Activated CD4-positive, alpha-beta T cell treated with anti-CD3 and anti-CD28 coated beads for 36 hours (primary cell): ENCODE measurements at regions of chr13 and their contacts with region 1.

Region 1: GRCh38 chr13:101626925-101627555 is 174.6 kb downstream of the ITGBL1 start:
- DNase-seq: peak; percentile 53
- ATAC-seq: peak; percentile 86
- H3K4me3 Mint-ChIP-seq: peak overlapping the region; percentile 1
- H3K27ac Mint-ChIP-seq: no peak overlapping the region
- H3K4me1 Mint-ChIP-seq: peaks cover 42% of the 10 kb centered on the region
- H3K27me3 Mint-ChIP-seq: peaks cover 13% of the 10 kb centered on the region

Region 2: GRCh38 chr13:100392709-100393641 is 1234.1 kb before region 1 on chr13:
- CTCF ChIA-PET with region 1: no interaction called
- POLR2A ChIA-PET with region 1: no interaction called
- intact Hi-C with region 1: loop called in 1 of 2 experiments (anchors 5 kb)
- DNase-seq: peak; percentile 85
- ATAC-seq: peak; percentile 80
- H3K4me3 Mint-ChIP-seq: no peak overlapping the region
- H3K27ac Mint-ChIP-seq: peak overlapping the region; percentile 59
- H3K4me1 Mint-ChIP-seq: peaks cover 31% of the 10 kb centered on the region
- H3K27me3 Mint-ChIP-seq: no peaks in the 10 kb centered on the region

Region 3: GRCh38 chr13:100674848-100675660 is 952.0 kb before region 1 on chr13:
- CTCF ChIA-PET with region 1: no interaction called
- POLR2A ChIA-PET with region 1: no interaction called
- intact Hi-C with region 1: loop called in 1 of 2 experiments (anchors 10 kb)
- DNase-seq: peak; percentile 99
- ATAC-seq: peak; percentile 96
- H3K4me3 Mint-ChIP-seq: peak overlapping the region; percentile 77
- H3K27ac Mint-ChIP-seq: peak overlapping the region; percentile 83
- H3K4me1 Mint-ChIP-seq: peaks cover 23% of the 10 kb centered on the region
- H3K27me3 Mint-ChIP-seq: peaks cover 7% of the 10 kb centered on the region

Region 4: DNA sequence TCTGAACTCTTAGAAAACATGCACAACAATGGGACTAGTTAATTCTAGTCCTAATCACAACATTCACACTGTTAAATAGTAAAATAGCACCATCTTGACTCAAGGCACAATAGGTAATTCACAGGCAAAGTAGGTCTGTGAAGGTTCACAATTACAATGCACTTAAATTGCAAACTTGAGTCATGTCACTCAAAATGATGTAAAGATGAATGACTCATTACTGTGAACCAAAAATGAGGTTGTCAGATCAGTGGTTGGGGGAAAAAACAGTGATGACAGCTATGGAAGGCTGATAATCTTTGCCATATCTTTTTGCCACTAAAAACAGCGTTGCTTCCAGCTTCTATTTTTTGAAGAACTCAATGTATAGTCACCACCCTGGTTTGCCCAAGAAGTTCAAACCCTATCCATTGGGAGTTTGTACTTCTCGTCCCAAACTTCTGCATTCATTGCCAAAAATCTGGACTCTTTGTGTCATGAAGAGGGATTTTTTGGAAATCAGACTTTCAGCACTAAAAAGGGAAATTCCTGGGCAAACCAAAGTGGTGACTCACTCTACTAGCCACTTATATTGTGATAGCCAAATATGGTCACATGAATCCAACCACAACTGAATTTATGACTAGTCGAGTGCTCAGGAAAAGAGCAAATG is 751.5 kb before region 1 on chr13:
- CTCF ChIA-PET with region 1: no interaction called
- POLR2A ChIA-PET with region 1: no interaction called
- intact Hi-C with region 1: loop called in 1 of 2 experiments (anchors 10 kb)
- DNase-seq: peak; percentile 17
- ATAC-seq: peak; percentile 91
- H3K4me3 Mint-ChIP-seq: no peak overlapping the region
- H3K27ac Mint-ChIP-seq: no peak overlapping the region
- H3K4me1 Mint-ChIP-seq: peaks cover 12% of the 10 kb centered on the region
- H3K27me3 Mint-ChIP-seq: peaks cover 41% of the 10 kb centered on the region

Region 5: DNA sequence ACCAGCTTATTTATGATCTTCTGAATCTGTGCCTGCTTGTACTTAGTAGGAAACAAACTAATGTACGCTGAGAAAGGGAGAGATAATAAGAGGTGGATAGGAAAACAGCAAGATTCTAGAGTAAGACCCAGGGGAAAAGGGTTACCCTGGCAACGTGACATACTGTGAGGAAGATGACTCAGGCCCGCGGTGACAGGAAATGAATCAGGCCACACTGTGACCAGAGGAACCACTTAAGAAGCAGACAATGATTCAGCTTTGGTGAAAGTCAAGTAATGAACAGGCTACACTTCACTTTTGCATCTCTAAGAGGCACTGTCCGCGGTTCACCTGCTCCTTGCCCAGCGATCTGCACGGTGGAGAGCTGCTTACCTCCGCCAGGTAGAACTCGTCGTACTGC is 369.0 kb before region 1 on chr13:
- CTCF ChIA-PET with region 1: no interaction called
- POLR2A ChIA-PET with region 1: no interaction called
- intact Hi-C with region 1: loop called (anchors 2 to 5 kb)
- DNase-seq: peak; percentile 83
- ATAC-seq: peak; percentile 99
- H3K4me3 Mint-ChIP-seq: no peak overlapping the region
- H3K27ac Mint-ChIP-seq: no peak overlapping the region
- H3K4me1 Mint-ChIP-seq: peaks cover 7% of the 10 kb centered on the region
- H3K27me3 Mint-ChIP-seq: peaks cover 14% of the 10 kb centered on the region

Region 6: GRCh38 chr13:101520672-101521071 is 106.4 kb before region 1 on chr13:
- CTCF ChIA-PET with region 1: no interaction called
- POLR2A ChIA-PET with region 1: no interaction called
- intact Hi-C with region 1: loop called in 1 of 2 experiments (anchors 5 kb)
- DNase-seq: peak; percentile 29
- ATAC-seq: peak; percentile 82
- H3K4me3 Mint-ChIP-seq: no peak overlapping the region
- H3K27ac Mint-ChIP-seq: no peak overlapping the region
- H3K4me1 Mint-ChIP-seq: peaks cover 14% of the 10 kb centered on the region
- H3K27me3 Mint-ChIP-seq: peaks cover 4% of the 10 kb centered on the region

Region 7: GRCh38 chr13:102091231-102091630 is 464.2 kb after region 1 on chr13:
- CTCF ChIA-PET with region 1: no interaction called
- POLR2A ChIA-PET with region 1: no interaction called
- intact Hi-C with region 1: no loop called
- DNase-seq: no peak
- ATAC-seq: no peak
- H3K4me3 Mint-ChIP-seq: no peak overlapping the region
- H3K27ac Mint-ChIP-seq: no peak overlapping the region
- H3K4me1 Mint-ChIP-seq: no peaks in the 10 kb centered on the region
- H3K27me3 Mint-ChIP-seq: peaks cover 2% of the 10 kb centered on the region